Naive thymus-derived CD8-positive, alpha-beta T cell (primary cell): ENCODE measurements at regions of chr22 and their contacts with region 1.

Region 1: DNA sequence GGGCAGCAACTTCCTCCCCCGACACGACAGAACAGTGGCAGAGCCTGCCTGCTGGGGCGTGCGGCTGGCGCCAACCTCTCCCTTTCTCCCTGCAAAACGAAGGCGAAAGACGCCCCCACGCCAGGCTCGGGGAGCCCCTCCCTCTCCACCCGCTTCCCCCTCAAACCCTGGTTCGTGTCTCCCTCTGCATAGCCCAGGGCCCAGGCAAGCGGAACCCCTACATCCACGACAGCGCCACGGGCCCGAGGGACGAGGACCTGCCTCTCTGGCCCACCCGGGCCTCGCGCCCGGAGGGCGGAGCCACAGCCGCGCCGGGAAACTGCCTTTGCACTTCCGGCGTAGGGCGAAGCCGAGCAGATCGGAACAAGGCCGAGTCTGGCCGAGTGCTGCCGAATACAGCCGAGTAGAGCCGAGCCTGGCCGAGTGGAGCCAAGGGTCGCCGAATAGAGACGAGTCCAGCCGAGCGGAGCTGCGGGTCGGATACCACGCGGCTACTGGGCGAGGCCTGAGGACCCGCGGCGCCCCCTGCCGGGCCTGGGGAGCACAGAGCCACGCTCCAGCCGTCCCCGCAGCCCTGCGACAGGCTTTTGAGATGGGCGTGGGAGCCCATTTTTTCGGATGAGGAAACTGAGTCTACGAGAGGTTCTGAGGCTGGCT is 11.2 kb upstream of the C1QTNF6 start:
- DNase-seq: peak; percentile 95 to 100 (median 99)
- ATAC-seq: peak; percentile 91 to 94
- H3K4me3 Mint-ChIP-seq: peak overlapping the region; percentile 82 to 93 (median 88)
- H3K27ac Mint-ChIP-seq: peak overlapping the region; percentile 85 to 100 (median 96)
- H3K4me1 Mint-ChIP-seq: peaks cover 15 to 82% (median 76%) of the 10 kb centered on the region in 4 donors
- H3K27me3 Mint-ChIP-seq: no peaks in the 10 kb centered on the region

Region 2: GRCh38 chr22:36636916-36637315 is 562.3 kb before region 1 on chr22:
- POLR2A ChIA-PET with region 1: no interaction called
- DNase-seq: no peak
- ATAC-seq: no peak
- H3K4me3 Mint-ChIP-seq: no peak overlapping the region
- H3K27ac Mint-ChIP-seq: no peak overlapping the region
- H3K4me1 Mint-ChIP-seq: peaks cover 0 to 3% (median 0%) of the 10 kb centered on the region in 4 donors
- H3K27me3 Mint-ChIP-seq: peaks cover 39 to 89% (median 68%) of the 10 kb centered on the region in 5 donors

Region 3: GRCh38 chr22:37079668-37080181 is 119.5 kb before region 1 on chr22:
- POLR2A ChIA-PET with region 1: interaction called, 22 read pairs
- DNase-seq: peak; percentile 45 to 92 (median 86)
- ATAC-seq: peak; percentile 78 to 89
- H3K4me3 Mint-ChIP-seq: peak overlapping the region; percentile 41 to 79 (median 72)
- H3K27ac Mint-ChIP-seq: peak overlapping the region; percentile 95 to 100 (median 99)
- H3K4me1 Mint-ChIP-seq: peaks cover 30 to 39% (median 32%) of the 10 kb centered on the region in 4 donors
- H3K27me3 Mint-ChIP-seq: peaks cover 0 to 8% (median 0%) of the 10 kb centered on the region in 5 donors

Region 4: DNA sequence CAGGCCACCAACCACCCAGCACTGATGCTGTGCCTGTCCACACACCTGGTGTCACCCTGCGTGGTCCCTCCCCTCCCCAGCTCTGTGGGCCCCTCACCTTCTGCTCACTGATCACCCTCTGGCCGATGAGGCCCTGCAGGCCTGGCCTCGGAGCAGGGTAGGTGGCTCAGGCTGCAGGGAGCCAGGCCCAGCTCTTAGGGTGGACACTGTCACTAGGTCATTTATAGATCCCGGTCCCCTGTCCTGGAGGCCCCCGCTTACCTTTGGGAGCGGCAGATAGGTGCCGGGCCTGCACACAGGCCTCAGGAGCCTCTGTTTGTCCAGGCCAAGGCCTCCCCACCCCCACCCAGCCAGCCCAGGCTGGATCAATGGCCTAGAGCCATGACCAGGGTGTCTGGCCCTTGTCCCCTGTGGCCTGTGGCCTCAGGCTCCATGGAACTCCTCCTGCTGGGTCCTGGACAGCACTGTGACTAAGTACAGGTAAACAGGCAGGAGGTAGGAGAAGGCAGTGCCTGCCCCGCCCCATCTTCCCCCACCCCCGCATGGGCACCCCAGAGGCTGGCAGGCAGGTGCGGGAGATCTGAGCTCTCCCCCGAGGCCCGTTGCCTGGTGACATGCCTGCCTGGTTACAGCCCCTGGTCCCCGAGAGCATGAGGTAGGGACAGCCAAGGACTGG is 89.9 kb before region 1 on chr22 and contains the start of gene TMPRSS6:
- POLR2A ChIA-PET with region 1: no interaction called
- DNase-seq: no peak
- ATAC-seq: no peak
- H3K4me3 Mint-ChIP-seq: no peak within 1 kb of the TSS
- H3K27ac Mint-ChIP-seq: peak within 1 kb of the TSS in 1 of 10 donors; percentile 35
- H3K4me1 Mint-ChIP-seq: peaks cover 0 to 6% (median under 1%) of the 10 kb centered on the region in 4 donors
- H3K27me3 Mint-ChIP-seq: no peaks in the 10 kb centered on the region
- polyA plus RNA-seq, gene TMPRSS6: 0.05 to 0.09 (median 0.06) TPM

Region 5: DNA sequence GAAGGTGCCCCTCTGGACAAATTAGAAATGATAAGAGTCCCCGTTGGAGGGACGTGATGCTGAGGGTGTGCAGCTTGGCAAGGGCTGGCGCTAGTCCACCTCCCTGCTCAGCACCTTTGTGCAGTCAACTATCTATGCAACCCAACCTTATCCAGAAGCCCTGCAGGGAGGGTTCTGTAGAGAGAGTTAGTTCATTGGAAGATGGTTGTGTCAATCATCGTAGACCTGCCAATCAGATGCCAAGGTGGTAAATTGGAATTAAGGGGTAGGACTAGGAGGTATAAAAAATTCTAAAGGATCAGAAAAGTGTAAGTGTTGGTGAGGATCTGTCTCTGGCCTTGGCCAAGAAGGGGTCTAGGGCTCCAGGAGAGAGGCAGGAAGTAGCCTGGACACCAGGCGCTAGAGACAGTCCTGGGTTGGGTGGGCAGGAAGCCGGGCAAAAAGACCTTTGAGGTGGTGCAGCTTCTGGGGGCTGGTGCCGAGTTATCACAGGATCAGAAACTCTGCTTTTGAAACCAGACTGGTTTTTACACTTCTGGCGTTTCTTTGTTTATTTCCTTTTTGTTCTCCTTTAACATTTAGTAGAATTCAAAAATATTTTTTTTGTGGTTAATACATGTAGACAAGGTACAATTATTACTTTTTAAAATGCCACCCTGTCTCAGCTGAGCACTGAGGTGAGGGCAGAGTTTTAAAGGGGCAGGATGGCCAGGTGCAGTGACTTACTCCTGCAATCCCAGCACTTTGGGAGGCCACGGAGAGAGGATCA is 12.8 kb before region 1 on chr22:
- POLR2A ChIA-PET with region 1: interaction called, 29 read pairs
- DNase-seq: peak in 8 of 10 donors; percentile 50 to 87 (median 76)
- ATAC-seq: peak; percentile 85 to 91
- H3K4me3 Mint-ChIP-seq: peak overlapping the region; percentile 44 to 85 (median 78)
- H3K27ac Mint-ChIP-seq: peak overlapping the region; percentile 32 to 97 (median 90)
- H3K4me1 Mint-ChIP-seq: peaks cover 28 to 67% (median 60%) of the 10 kb centered on the region in 4 donors
- H3K27me3 Mint-ChIP-seq: no peaks in the 10 kb centered on the region

Region 6: DNA sequence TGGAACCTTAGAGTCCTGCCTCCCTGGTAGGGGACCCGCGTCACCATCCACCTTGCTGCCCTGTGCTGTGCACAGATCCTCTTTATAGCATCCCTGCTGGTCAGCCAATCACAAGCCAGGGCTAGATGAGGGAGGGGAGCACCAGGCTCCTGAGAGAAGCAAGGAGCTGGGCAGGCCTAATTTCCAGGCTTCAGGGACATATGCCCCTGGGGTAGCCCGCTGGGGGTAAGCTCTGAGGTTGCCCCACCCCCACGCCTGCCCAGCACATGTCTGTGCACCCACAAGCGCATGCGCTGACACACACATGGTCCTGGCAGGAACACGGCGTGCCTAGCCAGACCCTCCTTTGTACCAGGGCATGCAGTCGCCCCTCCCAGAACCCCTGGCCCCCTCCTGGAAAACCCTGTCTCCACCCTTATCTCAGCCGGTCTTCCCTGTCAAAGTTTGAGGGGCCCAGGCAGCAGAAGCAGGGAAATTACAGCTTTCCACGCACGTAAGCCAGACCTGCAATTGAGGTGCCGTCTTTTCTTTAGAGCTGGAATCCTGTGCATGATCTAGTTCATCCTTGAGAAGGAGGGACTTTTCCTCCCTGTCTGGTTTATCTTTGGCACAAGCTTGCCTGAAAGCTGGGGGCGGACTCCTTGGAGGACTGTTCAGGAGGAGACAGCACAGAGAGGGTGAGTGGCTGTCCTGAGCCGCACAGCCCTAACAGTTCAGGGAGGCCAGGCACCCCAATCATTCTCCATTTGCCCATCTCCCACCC is 11.0 kb after region 1 on chr22:
- POLR2A ChIA-PET with region 1: interaction called, 308 read pairs
- DNase-seq: peak in 2 of 10 donors; percentile 15 to 44
- ATAC-seq: no peak
- H3K4me3 Mint-ChIP-seq: peak overlapping the region in 4 of 10 donors; percentile 13 to 53 (median 43)
- H3K27ac Mint-ChIP-seq: peak overlapping the region in 9 of 10 donors; percentile 56 to 97 (median 86)
- H3K4me1 Mint-ChIP-seq: peaks cover 36 to 94% (median 70%) of the 10 kb centered on the region in 4 donors
- H3K27me3 Mint-ChIP-seq: no peaks in the 10 kb centered on the region

Region 7: DNA sequence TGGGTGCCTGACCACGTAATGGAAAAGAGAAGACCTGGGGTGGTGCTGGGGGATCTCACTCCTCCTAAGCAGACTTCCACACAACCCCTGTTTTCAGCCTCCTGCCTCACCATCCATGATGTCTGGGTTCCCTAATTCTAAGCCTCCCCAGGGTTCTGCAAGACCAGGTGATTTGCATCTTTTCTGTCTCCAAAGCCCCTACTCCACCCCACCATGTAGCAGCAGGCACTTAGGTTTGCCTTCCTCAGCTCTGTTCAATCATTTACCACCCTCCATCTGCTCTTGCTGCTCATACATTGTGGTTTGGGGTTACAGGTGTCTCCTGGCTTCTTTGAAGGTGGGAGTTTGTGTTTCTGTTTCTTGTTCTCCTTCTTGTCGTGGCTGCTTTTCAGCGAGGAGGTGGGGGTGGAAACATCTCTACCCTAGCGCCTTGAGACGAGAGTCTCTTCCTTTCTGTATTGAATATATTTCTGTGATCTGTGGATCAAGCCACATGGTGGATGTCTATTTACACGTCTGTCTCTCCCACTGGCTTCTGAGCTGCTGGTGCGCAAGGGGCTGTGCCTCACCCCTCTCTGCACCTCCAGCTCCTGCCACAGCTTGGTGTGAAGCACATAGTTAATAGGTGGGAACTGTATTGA is 19.7 kb after region 1 on chr22:
- POLR2A ChIA-PET with region 1: interaction called, 308 read pairs
- DNase-seq: peak in 9 of 10 donors; percentile 59 to 95 (median 83)
- ATAC-seq: peak; percentile 85 to 88
- H3K4me3 Mint-ChIP-seq: peak overlapping the region; percentile 67 to 91 (median 80)
- H3K27ac Mint-ChIP-seq: peak overlapping the region; percentile 86 to 99 (median 97)
- H3K4me1 Mint-ChIP-seq: peaks cover 48 to 96% (median 93%) of the 10 kb centered on the region in 4 donors
- H3K27me3 Mint-ChIP-seq: no peaks in the 10 kb centered on the region

Region 8: DNA sequence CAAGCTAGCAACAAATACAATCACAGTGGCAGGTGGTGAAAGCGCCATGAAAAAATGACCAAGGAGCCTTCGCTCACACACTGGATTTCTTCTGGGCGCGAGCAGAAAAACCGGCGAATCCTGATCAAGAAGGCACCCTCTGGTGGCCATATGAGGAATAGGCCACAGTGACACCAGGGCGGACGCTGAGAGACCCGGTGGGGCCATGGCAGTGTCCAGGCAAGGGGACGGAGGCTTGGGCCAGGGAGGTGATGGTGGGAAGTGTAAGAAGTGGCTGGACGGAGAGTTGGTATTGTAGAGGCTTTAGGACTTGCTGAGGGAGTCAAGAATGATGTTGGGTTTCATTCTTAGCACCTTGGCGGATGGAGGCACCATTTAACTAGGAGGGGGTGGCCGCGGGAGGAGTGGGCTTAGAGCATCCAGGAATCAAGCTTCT is 61.7 kb after region 1 on chr22:
- POLR2A ChIA-PET with region 1: interaction called, 12 read pairs
- DNase-seq: peak in 9 of 10 donors; percentile 41 to 83 (median 61)
- ATAC-seq: peak; percentile 76 to 85
- H3K4me3 Mint-ChIP-seq: peak overlapping the region in 6 of 10 donors; percentile 9 to 53 (median 30)
- H3K27ac Mint-ChIP-seq: peak overlapping the region; percentile 10 to 90 (median 54)
- H3K4me1 Mint-ChIP-seq: peaks cover 16 to 26% (median 24%) of the 10 kb centered on the region in 4 donors
- H3K27me3 Mint-ChIP-seq: peaks cover 0 to 1% (median 0%) of the 10 kb centered on the region in 5 donors